ENCODE measurements at regions of chr5 and their contacts with region 1.

Region 1: GRCh38 chr5:170278611-170279452 is 18.7 kb downstream of the LCP2 start:
- DNase-seq: peak; percentile 81
- CTCF ChIP-seq: peak; percentile 3

Region 2: GRCh38 chr5:170333161-170333910 is 54.5 kb after region 1 on chr5:
- in situ Hi-C with region 1: loop called (anchors 5 kb)
- DNase-seq: no peak
- CTCF ChIP-seq: no peak